ENCODE measurements at regions of chr17 and their contacts with region 1.

Region 1: GRCh38 chr17:8941520-8941919 is 24.0 kb downstream of the PIK3R5 start:
- DNase-seq: no peak
- ATAC-seq: peak; percentile 68
- H3K4me3 ChIP-seq: peak overlapping the region; percentile 15; the same call in 1 of the 2 replicates
- H3K27ac ChIP-seq: peak overlapping the region; percentile 94
- H3K4me1 ChIP-seq: peaks cover 45% of the 10 kb centered on the region
- H3K27me3 ChIP-seq: no peaks in the 10 kb centered on the region
- CTCF ChIP-seq: no peak
- EP300 ChIP-seq: peak; percentile 61 to 82
- POLR2A ChIP-seq: 0 out of 2 replicates have a peak, but pooled peaks have one; percentile 13
- RAD21 ChIP-seq: no peak

Region 2: DNA sequence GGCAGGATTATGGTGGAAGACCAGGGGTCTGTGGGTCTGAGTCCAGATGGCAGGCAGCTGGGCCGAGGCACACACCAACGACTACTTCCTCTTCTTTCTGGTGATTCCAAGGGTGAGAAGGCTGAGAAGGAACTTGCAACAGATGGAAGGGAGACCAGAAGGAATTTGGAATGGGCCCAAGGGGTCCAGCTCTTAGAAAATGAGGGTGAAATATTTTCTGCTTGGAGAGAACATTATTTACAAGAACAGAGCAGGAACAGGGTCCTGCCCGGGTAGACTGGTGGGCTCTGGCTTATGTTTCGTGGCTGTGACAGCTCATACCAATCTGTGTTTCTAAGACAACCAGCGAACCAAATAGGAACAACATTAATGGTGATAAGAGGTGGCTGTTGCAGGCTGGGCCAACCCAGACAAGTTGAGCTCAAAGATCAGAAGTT is 233.5 kb before region 1 on chr17:
- CTCF ChIA-PET with region 1: no interaction called
- POLR2A ChIA-PET with region 1: no interaction called
- RAD21 ChIA-PET with region 1: no interaction called
- SMC1A ChIA-PET with region 1: no interaction called
- in situ Hi-C with region 1: no loop called
- intact Hi-C with region 1: no loop called
- DNase-seq: no peak
- ATAC-seq: no peak
- H3K4me3 ChIP-seq: no peak overlapping the region
- H3K27ac ChIP-seq: no peak overlapping the region
- H3K4me1 ChIP-seq: no peaks in the 10 kb centered on the region
- H3K27me3 ChIP-seq: peaks cover 0 to 5% of the 10 kb centered on the region in 2 experiments; a peak in 3 of 4 replicates
- CTCF ChIP-seq: no peak
- EP300 ChIP-seq: no peak
- POLR2A ChIP-seq: no peak
- RAD21 ChIP-seq: no peak

Region 3: GRCh38 chr17:8857919-8858318 is 83.6 kb before region 1 on chr17:
- CTCF ChIA-PET with region 1: interaction called, 4 read pairs
- POLR2A ChIA-PET with region 1: interaction called, 7 read pairs
- RAD21 ChIA-PET with region 1: interaction called, 7 read pairs
- SMC1A ChIA-PET with region 1: interaction called, 7 read pairs
- in situ Hi-C with region 1: no loop called
- intact Hi-C with region 1: loop called (anchors 1 kb)
- DNase-seq: peak; percentile 95
- ATAC-seq: peak; percentile 40
- H3K4me3 ChIP-seq: peak overlapping the region; percentile 57; the same call in 1 of the 2 replicates
- H3K27ac ChIP-seq: peak overlapping the region; percentile 99
- H3K4me1 ChIP-seq: peaks cover 60% of the 10 kb centered on the region
- H3K27me3 ChIP-seq: no peaks in the 10 kb centered on the region
- CTCF ChIP-seq: no peak
- EP300 ChIP-seq: peak; percentile 98 to 99
- POLR2A ChIP-seq: no peak
- RAD21 ChIP-seq: peak; percentile 12; the same call in 1 of the 2 replicates

Region 4: GRCh38 chr17:8867361-8867981 is 74.0 kb before region 1 on chr17 and contains the start of gene PIK3R6:
- CTCF ChIA-PET with region 1: interaction called, 3 read pairs
- POLR2A ChIA-PET with region 1: interaction called, 3 read pairs
- RAD21 ChIA-PET with region 1: interaction called, 12 read pairs
- SMC1A ChIA-PET with region 1: no interaction called
- in situ Hi-C with region 1: no loop called
- intact Hi-C with region 1: no loop called
- DNase-seq: no peak
- ATAC-seq: peak; percentile 65
- H3K4me3 ChIP-seq: peak within 1 kb of the TSS; percentile 99
- H3K27ac ChIP-seq: peak within 1 kb of the TSS; percentile 88
- H3K4me1 ChIP-seq: peaks cover 25% of the 10 kb centered on the region
- H3K27me3 ChIP-seq: no peaks in the 10 kb centered on the region
- CTCF ChIP-seq: no peak
- EP300 ChIP-seq: no peak
- POLR2A ChIP-seq: peak; percentile 83
- RAD21 ChIP-seq: no peak
- polyA plus RNA-seq, gene PIK3R6: 6.7 to 7.4 TPM

Region 5: DNA sequence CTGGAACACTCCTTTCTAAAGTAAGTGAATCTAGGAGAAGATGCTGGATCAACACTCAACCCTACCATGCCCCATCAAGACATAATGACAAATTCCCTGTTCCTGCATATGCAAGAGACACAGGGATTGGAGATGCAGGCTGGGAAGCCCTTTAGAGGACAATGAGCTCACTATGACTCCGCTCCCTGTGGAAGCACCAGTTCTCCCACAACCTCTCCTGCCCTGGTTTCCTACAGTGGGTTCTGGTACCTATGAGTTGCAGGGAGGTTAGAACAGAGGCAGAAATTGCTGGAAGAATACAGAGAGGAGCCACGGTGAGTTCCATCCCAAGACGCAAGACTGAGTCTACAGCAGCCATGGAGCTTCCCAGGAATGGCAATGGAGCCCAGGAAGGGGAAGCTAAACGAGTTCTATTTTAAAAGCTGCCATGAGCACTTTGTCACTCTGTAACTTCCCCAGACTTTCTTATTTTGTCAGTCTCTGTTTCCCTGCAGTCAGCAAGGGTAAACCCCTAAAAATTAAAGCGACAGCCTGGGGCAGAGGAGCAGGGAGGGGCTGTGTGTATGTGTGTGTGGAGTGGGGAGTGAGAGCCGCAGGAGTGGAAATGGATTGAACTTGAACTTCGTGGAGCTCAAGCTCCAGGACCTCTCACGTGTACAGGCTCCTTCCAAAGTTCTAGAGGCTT is 31.8 kb before region 1 on chr17:
- CTCF ChIA-PET with region 1: no interaction called
- POLR2A ChIA-PET with region 1: interaction called, 4 read pairs
- RAD21 ChIA-PET with region 1: interaction called, 4 read pairs
- SMC1A ChIA-PET with region 1: interaction called, 19 read pairs
- in situ Hi-C with region 1: no loop called
- intact Hi-C with region 1: no loop called
- DNase-seq: no peak
- ATAC-seq: peak; percentile 28; the same call in 2 of the 3 replicates
- H3K4me3 ChIP-seq: no peak overlapping the region
- H3K27ac ChIP-seq: no peak overlapping the region
- H3K4me1 ChIP-seq: peaks cover 21% of the 10 kb centered on the region
- H3K27me3 ChIP-seq: no peaks in the 10 kb centered on the region
- CTCF ChIP-seq: no peak
- EP300 ChIP-seq: no peak
- POLR2A ChIP-seq: no peak
- RAD21 ChIP-seq: no peak

Region 6: GRCh38 chr17:8922451-8922850 is 19.1 kb before region 1 on chr17:
- CTCF ChIA-PET with region 1: interaction called, 9 read pairs
- POLR2A ChIA-PET with region 1: interaction called, 22 read pairs
- RAD21 ChIA-PET with region 1: interaction called, 10 read pairs
- SMC1A ChIA-PET with region 1: interaction called, 63 read pairs
- in situ Hi-C with region 1: no loop called
- intact Hi-C with region 1: loop called (anchors 2 kb)
- DNase-seq: no peak
- ATAC-seq: no peak
- H3K4me3 ChIP-seq: no peak overlapping the region
- H3K27ac ChIP-seq: no peak overlapping the region
- H3K4me1 ChIP-seq: peaks cover 50% of the 10 kb centered on the region
- H3K27me3 ChIP-seq: no peaks in the 10 kb centered on the region
- CTCF ChIP-seq: no peak
- EP300 ChIP-seq: no peak
- POLR2A ChIP-seq: no peak
- RAD21 ChIP-seq: no peak

Region 7: DNA sequence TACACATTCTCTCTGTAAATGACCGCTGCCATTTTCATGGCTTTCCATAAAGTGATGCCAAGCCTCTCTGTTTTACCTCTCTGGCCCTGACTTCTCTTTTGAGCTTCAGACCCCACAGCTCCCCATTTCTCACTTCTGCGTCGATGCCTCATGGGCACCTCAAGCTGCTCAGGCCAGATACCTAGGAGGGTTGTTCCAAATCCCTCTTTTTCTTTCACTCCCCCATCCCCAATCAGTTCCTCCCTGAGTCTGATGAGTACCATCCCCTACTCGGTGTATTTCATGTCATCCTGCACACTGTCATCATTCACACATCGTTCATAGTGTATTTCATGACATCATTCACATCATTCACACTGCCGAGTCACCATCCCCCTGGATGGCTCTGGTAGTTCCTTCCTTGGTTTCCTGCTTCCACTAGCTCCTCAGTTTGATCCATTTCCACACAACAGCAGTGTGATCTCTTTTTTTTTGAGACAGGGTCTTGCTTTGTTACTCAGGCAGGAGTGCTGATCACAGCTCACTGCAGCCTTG is 122.9 kb after region 1 on chr17:
- CTCF ChIA-PET with region 1: no interaction called
- POLR2A ChIA-PET with region 1: no interaction called
- RAD21 ChIA-PET with region 1: no interaction called
- SMC1A ChIA-PET with region 1: no interaction called
- in situ Hi-C with region 1: no loop called
- intact Hi-C with region 1: no loop called
- DNase-seq: no peak
- ATAC-seq: no peak
- H3K4me3 ChIP-seq: no peak overlapping the region
- H3K27ac ChIP-seq: no peak overlapping the region
- H3K4me1 ChIP-seq: no peaks in the 10 kb centered on the region
- H3K27me3 ChIP-seq: no peaks in the 10 kb centered on the region; a peak in 1 of 4 replicates
- CTCF ChIP-seq: no peak
- EP300 ChIP-seq: no peak
- POLR2A ChIP-seq: no peak
- RAD21 ChIP-seq: no peak